Caco-2 (cell line): ENCODE measurements at regions of chr22 and their contacts with region 1.

Region 1: DNA sequence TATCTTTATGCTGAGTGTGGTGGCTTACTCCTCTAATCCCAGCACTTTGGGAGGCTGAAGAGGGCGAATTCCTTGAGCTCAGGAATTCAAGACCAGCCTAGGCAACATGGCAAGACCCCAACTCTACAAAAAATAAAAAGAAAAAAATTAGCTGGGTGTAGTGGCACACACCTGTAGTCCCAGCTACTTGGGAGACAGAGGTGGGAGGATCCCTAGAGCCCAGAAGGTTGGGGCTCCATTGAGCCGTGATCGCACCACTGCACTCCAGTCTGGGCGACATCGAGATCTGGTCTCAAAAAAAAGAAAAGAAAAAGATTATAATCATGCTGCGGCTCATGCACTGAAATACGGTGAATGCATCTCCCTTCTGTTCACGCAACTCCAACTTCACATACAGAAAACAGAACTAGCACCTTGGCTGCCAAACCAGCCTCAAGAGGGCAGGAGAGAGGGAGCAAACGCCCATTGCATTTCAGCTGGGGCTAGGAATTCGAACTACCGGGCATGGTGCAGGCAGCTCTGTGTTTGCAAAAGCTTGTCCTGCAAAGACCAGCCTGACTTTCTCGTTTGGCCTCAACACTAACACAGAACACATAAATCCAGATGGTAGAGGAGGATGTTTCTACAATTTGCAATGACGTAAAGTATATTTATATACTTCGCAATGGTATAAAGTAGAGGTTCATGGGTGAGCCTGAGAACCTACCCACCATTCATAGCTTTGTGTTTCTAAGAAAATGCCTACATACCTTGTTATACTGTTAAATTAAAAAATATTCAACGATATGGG is 6.3 kb upstream of the SYNGR1 start:
- DNase-seq: peak; percentile 82 to 84
- H3K4me3 ChIP-seq: no peak overlapping the region
- H3K4me3 Mint-ChIP-seq: no peak overlapping the region
- H3K27ac Mint-ChIP-seq: peak overlapping the region; percentile 53
- H3K4me1 ChIP-seq: peaks cover 10% of the 10 kb centered on the region
- H3K4me1 Mint-ChIP-seq: peaks cover 12% of the 10 kb centered on the region
- H3K27me3 ChIP-seq: no peaks in the 10 kb centered on the region
- H3K27me3 Mint-ChIP-seq: no peaks in the 10 kb centered on the region
- CTCF ChIP-seq: peak; percentile 68 to 90

Region 2: DNA sequence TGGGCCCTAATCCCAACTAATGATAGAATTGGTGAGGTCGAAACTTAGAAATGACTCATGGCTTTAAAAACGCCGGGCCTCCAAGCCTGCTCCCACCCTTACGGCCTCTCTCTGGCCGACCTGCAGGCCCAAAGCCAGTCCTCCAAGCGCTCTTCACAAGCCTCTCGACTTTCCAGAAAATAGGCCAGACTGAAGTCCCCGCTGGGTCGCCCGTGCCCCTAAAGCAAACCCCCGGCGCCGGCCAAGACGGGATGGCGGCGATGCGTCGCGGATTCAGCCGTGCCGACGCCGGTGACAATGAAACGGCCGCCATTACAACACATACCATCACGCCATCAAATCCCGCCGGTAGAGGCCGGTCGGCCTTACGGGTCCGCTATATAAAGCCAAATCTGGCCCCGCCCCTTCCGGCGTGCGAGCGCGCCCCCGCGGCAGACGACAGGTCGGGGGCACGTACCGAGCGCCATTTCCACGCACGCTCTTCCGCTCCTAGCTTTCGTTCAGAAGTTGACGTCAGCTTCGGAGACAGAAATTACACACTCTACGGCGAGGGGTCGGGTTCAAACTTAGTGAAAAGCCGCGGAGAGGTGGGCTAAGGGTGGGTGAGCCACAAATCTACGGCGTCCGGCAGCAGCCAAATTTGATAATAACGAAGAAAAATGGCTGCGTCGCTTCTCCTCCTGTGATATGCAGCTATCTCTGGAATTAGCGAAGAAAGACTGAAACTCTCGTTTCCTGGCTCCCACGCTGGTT is 24.0 kb before region 1 on chr22 and contains the start of gene RPL3:
- CTCF ChIA-PET with region 1: interaction called, 9 read pairs
- POLR2A ChIA-PET with region 1: interaction called, 14 read pairs
- intact Hi-C with region 1: no loop called
- DNase-seq: peak; percentile 93 to 97
- H3K4me3 ChIP-seq: peak within 1 kb of the TSS; percentile 67
- H3K4me3 Mint-ChIP-seq: peak within 1 kb of the TSS; percentile 96
- H3K27ac Mint-ChIP-seq: peak within 1 kb of the TSS; percentile 100
- H3K4me1 ChIP-seq: peaks cover 20% of the 10 kb centered on the region
- H3K4me1 Mint-ChIP-seq: peaks cover 8% of the 10 kb centered on the region
- H3K27me3 ChIP-seq: no peaks in the 10 kb centered on the region
- H3K27me3 Mint-ChIP-seq: peaks cover 4% of the 10 kb centered on the region
- CTCF ChIP-seq: no peak
- total RNA-seq, gene RPL3: 1,668 and 1,699 TPM in 2 replicates

Region 3: DNA sequence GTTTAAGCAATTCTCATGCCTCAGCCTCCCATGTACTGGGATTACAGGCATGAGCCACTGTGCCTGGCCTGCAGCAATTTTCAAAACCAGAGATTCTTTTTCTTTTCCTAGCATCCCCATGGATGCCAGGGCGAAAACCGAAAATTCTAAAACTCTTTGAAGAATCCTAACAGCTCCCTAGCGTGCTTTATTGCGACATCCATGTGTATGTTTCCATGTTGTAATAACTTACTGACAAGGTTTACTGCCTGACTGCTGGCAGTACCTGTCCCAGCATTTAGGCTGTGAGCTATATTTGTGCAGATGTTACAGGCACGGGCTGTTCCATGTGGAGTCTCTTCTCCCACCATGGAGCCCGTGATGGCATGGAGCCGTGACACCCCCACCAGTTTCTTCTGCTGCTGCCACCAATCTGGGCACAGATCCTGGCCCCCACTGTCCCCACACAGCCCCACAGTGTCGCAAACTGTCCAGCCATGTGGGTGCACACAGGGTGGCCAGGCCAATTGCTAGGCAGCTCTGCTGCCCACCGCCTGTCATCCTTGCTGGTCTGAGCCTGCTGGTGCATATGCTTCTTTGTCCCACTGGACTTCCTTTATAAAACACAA is 49.0 kb after region 1 on chr22:
- CTCF ChIA-PET with region 1: interaction called, 3 read pairs
- POLR2A ChIA-PET with region 1: interaction called, 3 read pairs
- intact Hi-C with region 1: loop called (anchors 10 kb)
- DNase-seq: peak in 1 of 2 experiments; percentile 52
- H3K4me3 ChIP-seq: no peak overlapping the region
- H3K4me3 Mint-ChIP-seq: no peak overlapping the region
- H3K27ac Mint-ChIP-seq: no peak overlapping the region
- H3K4me1 ChIP-seq: no peaks in the 10 kb centered on the region
- H3K4me1 Mint-ChIP-seq: no peaks in the 10 kb centered on the region
- H3K27me3 ChIP-seq: no peaks in the 10 kb centered on the region
- H3K27me3 Mint-ChIP-seq: no peaks in the 10 kb centered on the region
- CTCF ChIP-seq: no peak